Right ventricle myocardium superior (tissue), 1 donor: ENCODE measurements at regions of chr16 and their contacts with region 1.

Region 1: DNA sequence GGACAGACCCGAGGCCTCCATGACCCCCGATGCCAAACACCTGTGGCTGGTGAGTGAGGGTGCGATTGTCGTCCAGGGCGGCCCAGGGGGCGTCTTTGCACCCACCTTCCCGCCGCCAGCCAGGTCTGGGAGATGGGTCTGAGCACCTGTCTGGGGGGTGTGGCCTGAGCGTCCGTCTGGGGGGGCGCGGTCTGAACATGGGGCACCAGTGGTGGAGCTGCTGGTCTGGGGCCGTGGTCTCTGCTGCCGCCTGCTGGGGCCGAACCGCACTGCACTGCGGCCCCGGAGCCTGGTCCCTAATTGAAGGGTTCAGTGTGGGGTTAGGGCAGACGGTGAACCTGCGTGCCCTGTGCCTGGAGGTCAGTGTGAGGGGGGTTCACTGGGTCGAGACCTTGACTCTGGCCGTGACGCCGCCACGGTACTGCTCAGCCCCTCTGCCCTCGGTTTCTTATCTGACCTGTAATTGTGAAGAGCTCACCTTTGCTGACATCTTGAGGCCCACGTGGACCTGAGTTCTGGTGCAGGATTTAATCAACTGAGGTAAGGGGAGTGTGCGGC is 12.6 kb upstream of the TCF25 start:
- DNase-seq: peak; percentile 80
- ATAC-seq: peak; percentile 87

Region 2: DNA sequence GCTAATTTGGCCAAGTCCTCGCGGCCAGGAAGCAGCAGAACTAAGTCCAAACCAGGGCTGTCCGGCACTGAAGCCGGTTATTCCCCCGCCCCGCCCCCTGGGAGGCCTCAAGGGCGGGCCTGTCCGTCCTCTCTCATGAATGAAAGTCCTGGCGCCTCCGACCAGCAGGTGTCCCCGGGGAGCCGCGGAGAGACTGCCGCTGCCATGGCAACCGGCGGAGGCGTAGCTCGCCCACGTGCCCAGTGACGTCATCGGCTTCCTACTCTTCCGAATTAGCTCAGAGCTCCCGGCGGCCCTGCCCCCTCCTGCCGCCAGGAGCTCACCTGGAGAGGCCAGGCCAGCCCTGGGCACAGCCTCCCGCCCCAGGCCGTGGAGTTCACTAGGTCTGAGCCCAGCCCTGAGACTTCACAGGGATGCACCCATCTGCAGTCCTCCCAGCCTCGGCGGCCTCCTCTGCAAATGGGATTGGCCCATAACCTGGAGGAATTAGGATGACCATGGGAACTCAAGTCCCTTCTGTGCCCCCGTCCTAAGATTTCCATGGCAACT is 160.7 kb before region 1 on chr16:
- intact Hi-C with region 1: loop called (anchors 10 kb)
- DNase-seq: peak; percentile 99
- ATAC-seq: peak; percentile 79

Region 3: DNA sequence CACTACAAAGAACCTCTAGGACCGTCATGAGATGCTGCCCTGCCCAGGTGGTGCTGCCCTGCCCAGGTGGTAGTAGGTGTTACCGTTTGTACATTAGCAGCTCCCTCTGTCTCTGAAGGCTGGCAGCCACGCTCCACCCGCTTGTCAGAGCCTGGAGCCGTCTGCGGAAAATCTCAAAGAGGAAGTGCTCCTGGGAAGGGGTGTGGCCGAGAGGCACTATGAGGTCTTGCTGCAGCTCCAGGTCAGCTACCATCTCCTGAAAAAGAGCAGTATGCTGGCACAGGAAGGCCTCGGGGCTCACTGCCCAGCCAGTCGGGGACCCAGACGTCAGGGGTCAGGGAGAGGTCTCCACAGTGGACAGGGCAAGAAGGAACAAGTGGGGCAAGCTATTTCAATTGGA is 111.2 kb before region 1 on chr16:
- intact Hi-C with region 1: loop called (anchors 5 kb)
- DNase-seq: peak; percentile 52
- ATAC-seq: peak; percentile 60

Region 4: GRCh38 chr16:89904595-89905391 is 44.0 kb after region 1 on chr16:
- intact Hi-C with region 1: no loop called
- DNase-seq: no peak
- ATAC-seq: no peak